AG04450 (cell line): ENCODE measurements at regions of chr2 and their contacts with region 1.

Region 1: DNA sequence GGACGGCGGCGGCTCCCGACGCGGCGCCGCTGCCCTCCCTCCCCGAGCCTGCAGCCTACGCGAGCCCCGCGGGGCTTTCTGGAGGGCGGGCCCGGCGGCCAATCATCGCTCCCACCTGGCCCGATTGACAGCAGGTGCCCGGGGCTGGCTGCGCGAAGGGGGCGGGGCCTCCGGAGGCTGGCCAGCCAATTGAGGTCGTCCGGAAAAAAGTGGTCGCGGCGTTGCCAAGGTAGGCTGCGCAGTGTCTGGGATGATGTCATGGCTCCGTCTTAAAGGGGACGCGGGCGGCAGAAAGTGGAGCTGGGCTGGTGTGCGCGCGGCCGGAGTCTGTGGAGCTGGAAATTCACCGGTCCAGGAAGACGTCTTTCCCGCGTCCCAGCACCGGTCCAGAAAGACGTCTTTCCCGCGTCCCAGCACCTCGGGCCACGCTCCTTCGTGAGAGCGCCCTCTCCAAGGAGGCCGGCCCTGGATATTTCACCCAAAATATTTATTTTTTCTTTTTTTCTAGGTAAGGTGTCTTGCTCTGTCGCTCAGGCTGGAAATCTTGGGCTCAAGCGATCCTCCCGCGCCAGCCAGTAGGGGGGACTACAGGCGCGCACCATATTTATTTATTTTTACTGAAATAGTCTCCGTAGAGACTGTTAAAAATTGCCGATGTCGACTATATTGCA is at the start of gene ACTR1B:
- DNase-seq: peak; percentile 95
- H3K4me3 ChIP-seq: peak within 1 kb of the TSS; percentile 79
- H3K27ac ChIP-seq: peak within 1 kb of the TSS; percentile 94
- H3K27me3 ChIP-seq: no peaks in the 10 kb centered on the region
- CTCF ChIP-seq: peak; percentile 68
- polyA plus RNA-seq, gene ACTR1B: 26.4 and 37.6 TPM in 2 replicates

Region 2: DNA sequence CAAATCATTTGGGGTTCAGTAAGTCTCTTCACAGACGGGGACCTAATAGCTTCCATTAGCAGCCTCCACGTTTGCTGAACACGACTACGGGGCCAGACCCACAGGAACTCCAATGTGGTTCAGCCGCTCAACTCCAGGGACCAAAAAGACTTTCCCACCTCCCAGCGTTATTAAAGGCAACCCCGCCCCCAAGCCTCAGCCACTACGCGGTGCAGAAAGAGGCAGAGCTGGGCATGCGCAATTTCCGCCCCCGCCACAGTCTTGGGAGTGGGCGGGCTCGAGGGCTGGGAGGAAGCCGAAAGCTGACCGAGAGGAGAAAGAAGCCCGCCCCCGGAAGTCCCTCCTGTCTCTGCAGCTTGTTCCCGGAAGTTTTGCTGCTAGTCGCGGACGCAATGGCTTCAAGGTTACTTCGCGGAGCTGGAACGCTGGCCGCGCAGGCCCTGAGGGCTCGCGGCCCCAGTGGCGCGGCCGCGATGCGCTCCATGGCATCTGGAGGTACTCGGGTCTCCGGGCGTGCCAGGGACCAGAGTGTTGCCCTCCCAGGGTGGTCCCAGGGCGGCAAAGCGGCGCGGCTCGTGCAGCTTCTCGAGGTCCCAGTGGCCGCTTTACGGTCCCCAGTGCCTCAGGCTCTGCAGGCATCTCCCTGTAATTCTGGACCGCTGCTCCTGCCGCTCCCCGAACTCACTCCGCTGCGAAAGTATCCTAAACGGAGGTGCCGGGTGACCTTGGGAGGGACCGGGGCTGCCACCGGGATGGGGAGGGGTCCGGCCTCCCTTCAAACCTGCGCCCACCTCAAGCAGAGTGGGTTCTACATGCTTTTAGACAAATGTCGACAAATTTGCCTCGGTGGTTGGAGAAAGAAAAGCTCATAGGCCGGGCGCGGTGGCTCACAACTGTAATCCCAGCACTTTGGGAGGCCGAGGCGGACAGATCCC is 18.1 kb before region 1 on chr2 and contains the start of gene COX5B:
- CTCF ChIA-PET with region 1: interaction called, 8 read pairs
- POLR2A ChIA-PET with region 1: interaction called, 33 read pairs
- DNase-seq: peak; percentile 92
- H3K4me3 ChIP-seq: peak within 1 kb of the TSS; percentile 97
- H3K27ac ChIP-seq: peak within 1 kb of the TSS; percentile 49
- H3K27me3 ChIP-seq: no peaks in the 10 kb centered on the region
- CTCF ChIP-seq: no peak
- polyA plus RNA-seq, gene COX5B: 287 and 302 TPM in 2 replicates

Region 3: GRCh38 chr2:97675430-97676113 is 11.5 kb after region 1 on chr2:
- CTCF ChIA-PET with region 1: interaction called, 11 read pairs
- POLR2A ChIA-PET with region 1: no interaction called
- DNase-seq: no peak
- H3K4me3 ChIP-seq: no peak overlapping the region
- H3K27ac ChIP-seq: no peak overlapping the region
- H3K27me3 ChIP-seq: no peaks in the 10 kb centered on the region
- CTCF ChIP-seq: no peak

Region 4: DNA sequence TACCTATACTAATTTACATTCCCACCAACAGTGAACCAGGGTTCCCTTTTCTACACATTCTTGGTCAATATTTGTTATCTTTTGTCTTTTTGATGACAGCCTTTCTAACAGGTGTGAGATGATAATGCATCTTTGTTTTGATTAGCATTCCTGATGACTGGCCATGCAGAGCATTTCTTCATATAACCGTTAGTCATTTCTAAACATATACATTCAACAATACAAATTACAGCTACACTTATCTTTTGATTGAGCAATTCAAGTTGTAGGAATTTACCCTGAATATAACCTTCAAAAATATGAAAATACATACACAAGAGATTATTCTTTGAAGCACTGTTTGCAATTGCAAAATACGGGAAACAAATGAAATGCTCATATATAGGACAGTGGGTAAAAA is 236.7 kb after region 1 on chr2:
- CTCF ChIA-PET with region 1: no interaction called
- POLR2A ChIA-PET with region 1: no interaction called
- DNase-seq: peak; percentile 1
- H3K4me3 ChIP-seq: no peak overlapping the region
- H3K27ac ChIP-seq: no peak overlapping the region
- H3K27me3 ChIP-seq: no peaks in the 10 kb centered on the region
- CTCF ChIP-seq: no peak